HepG2 (cell line): ENCODE measurements at regions of chr4 and their contacts with region 1.

Region 1: GRCh38 chr4:140711910-140712309 is 44.3 kb downstream of the TBC1D9 start:
- DNase-seq: peak; percentile 57
- ATAC-seq: peak; percentile 53
- H3K4me3 ChIP-seq: no peak overlapping the region
- H3K27ac ChIP-seq: peak overlapping the region; percentile 82
- H3K4me1 ChIP-seq: peaks cover 59% of the 10 kb centered on the region
- H3K27me3 ChIP-seq: no peaks in the 10 kb centered on the region
- CTCF ChIP-seq: no peak
- EP300 ChIP-seq: 0 out of 4 replicates have a peak, but pooled peaks of 1 of the 2 experiments have one; percentile 43
- POLR2A ChIP-seq: no peak
- RAD21 ChIP-seq: no peak

Region 2: GRCh38 chr4:140637836-140638235 is 74.1 kb before region 1 on chr4:
- CTCF ChIA-PET with region 1: no interaction called
- POLR2A ChIA-PET with region 1: interaction called, 4 read pairs
- in situ Hi-C with region 1: loop called (anchors 5 kb)
- intact Hi-C with region 1: no loop called
- DNase-seq: peak; percentile 59
- ATAC-seq: peak; percentile 19; the same call in 1 of the 3 replicates
- H3K4me3 ChIP-seq: no peak overlapping the region
- H3K27ac ChIP-seq: no peak overlapping the region
- H3K4me1 ChIP-seq: peaks cover 82% of the 10 kb centered on the region
- H3K27me3 ChIP-seq: no peaks in the 10 kb centered on the region
- CTCF ChIP-seq: peak; percentile 79
- EP300 ChIP-seq: no peak
- POLR2A ChIP-seq: no peak
- RAD21 ChIP-seq: peak; percentile 45; the same call in 1 of the 2 replicates

Region 3: DNA sequence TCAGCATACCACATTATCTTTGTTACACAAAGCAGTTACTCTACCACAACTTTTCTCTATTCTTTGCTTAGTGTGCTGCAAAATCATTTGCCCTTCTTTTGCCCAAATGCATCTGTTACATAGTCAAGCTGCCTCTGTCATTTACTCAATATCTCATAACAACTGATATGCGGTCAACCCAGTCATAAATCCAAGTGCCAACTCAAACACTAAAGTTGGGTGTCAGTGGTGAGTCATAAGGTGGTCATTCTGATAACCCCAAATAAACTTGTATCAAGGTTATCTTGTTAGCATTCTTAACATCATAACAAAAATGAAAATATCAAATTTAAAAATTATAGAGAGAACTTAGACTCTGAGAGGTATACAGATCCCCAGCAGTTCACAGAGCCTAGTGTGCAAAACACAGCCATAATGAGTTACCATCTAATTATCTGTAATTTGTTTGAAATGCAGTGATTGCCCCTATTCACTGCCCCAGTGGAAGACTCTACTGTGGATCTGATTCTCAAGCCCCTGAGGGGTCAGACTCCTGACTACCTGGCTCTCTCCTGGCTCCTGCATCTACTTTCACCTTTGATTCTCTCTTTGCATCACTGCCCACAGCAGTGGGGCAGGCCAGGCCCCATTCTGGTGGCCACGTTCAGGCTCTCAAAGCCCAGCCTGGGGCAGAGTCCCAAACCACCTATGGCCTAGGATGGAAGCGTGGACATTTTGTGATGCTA is 15.0 kb after region 1 on chr4:
- CTCF ChIA-PET with region 1: no interaction called
- POLR2A ChIA-PET with region 1: interaction called, 5 read pairs
- in situ Hi-C with region 1: no loop called
- intact Hi-C with region 1: loop called (anchors 1 kb)
- DNase-seq: no peak
- ATAC-seq: peak; percentile 21
- H3K4me3 ChIP-seq: no peak overlapping the region
- H3K27ac ChIP-seq: peak overlapping the region; percentile 94
- H3K4me1 ChIP-seq: peaks cover 73% of the 10 kb centered on the region
- H3K27me3 ChIP-seq: no peaks in the 10 kb centered on the region
- CTCF ChIP-seq: no peak
- EP300 ChIP-seq: no peak
- POLR2A ChIP-seq: no peak
- RAD21 ChIP-seq: no peak

Region 4: DNA sequence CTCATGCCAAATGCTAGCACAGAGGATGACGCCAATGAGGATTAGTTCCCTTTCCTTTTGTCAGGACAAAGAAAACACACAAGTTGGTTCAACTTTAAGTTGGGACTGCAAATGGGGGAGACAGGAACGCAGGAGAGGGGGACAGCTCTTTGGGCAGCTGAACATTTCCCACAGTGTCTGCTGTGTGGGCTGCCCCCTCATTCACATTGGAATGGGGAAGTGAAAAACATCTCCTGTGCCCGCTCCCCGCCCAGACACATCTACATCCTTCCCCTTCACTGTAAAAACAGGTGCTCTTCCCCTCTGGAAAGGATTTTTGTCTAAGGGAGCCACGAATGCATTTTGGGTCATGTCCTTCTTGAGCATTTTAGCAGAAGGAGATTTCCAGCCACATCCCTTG is 88.8 kb after region 1 on chr4:
- CTCF ChIA-PET with region 1: no interaction called
- POLR2A ChIA-PET with region 1: no interaction called
- in situ Hi-C with region 1: no loop called
- intact Hi-C with region 1: no loop called
- DNase-seq: no peak
- ATAC-seq: no peak
- H3K4me3 ChIP-seq: no peak overlapping the region
- H3K27ac ChIP-seq: no peak overlapping the region
- H3K4me1 ChIP-seq: no peaks in the 10 kb centered on the region
- H3K27me3 ChIP-seq: no peaks in the 10 kb centered on the region
- CTCF ChIP-seq: no peak
- EP300 ChIP-seq: no peak
- POLR2A ChIP-seq: no peak
- RAD21 ChIP-seq: no peak